SK-N-SH (cell line): ENCODE measurements at regions of chr2 and their contacts with region 1.

Region 1: DNA sequence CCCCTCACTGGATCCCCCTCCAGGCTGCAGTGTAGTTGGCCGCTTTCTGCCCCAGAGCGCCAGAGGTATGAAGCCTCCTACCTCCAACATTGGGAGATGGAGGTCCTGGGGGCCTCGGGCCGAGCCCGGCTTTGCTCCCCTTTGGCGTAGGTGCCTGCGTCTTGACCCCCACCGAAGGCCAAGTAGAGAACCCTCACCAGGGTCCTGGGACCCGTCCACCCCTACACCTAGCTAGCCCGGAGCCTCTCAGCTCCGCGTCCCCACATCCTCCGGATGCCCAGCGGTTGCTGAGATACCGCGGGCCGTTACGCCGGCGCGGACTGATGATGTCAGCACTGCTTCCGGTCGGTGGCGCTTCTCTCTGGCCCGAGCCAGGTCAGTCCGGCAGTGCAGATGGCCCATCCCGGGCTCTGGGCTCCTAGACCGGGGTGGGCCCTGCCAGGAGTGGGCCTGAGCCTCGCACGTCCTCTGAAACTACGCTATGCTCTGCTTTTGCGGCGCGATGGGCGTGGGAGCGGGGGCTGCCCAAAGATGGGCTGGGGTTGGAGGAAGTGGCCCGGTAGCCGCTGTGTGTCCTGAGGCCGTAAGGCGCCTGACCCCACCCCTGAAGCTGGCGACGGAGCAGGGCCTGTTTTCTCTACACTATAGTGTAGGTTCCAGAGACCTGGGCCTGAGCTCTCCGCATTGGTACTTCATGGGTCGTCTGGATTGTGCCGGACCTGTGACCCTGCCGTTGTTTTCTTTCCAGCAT is at the starts of genes GLB1L and STK16:
- DNase-seq: peak; percentile 98
- H3K4me3 ChIP-seq: peak within 1 kb of the TSS; percentile 84 to 97
- H3K27ac ChIP-seq: peak within 1 kb of the TSS; percentile 78 to 92
- H3K4me1 ChIP-seq: peaks cover 15 to 26% of the 10 kb centered on the region in 2 experiments
- H3K27me3 ChIP-seq: no peaks in the 10 kb centered on the region
- CTCF ChIP-seq: no peak
- EP300 ChIP-seq: no peak
- RAD21 ChIP-seq: peak; percentile 3; the same call in 1 of the 2 replicates
- polyA plus RNA-seq, gene GLB1L: 11.7 and 14.1 TPM in 2 replicates
- polyA plus RNA-seq, gene STK16: 57.6 and 78.6 TPM in 2 replicates

Region 2: GRCh38 chr2:219229305-219230058 is 15.8 kb before region 1 on chr2 and contains the starts of genes ANKZF1 and ATG9A:
- CTCF ChIA-PET with region 1: interaction called, 5 read pairs
- POLR2A ChIA-PET with region 1: interaction called, 23 read pairs
- DNase-seq: peak; percentile 98
- H3K4me3 ChIP-seq: peak within 1 kb of the TSS; percentile 82 to 87
- H3K27ac ChIP-seq: peak within 1 kb of the TSS; percentile 74 to 77
- H3K4me1 ChIP-seq: peaks cover 3 to 16% of the 10 kb centered on the region in 2 experiments; a peak in 1 of 4 replicates
- H3K27me3 ChIP-seq: no peaks in the 10 kb centered on the region
- CTCF ChIP-seq: no peak
- EP300 ChIP-seq: no peak
- RAD21 ChIP-seq: no peak
- polyA plus RNA-seq, gene ANKZF1: 22.3 and 30.8 TPM in 2 replicates
- polyA plus RNA-seq, gene ATG9A: 29.6 and 33.2 TPM in 2 replicates

Region 3: DNA sequence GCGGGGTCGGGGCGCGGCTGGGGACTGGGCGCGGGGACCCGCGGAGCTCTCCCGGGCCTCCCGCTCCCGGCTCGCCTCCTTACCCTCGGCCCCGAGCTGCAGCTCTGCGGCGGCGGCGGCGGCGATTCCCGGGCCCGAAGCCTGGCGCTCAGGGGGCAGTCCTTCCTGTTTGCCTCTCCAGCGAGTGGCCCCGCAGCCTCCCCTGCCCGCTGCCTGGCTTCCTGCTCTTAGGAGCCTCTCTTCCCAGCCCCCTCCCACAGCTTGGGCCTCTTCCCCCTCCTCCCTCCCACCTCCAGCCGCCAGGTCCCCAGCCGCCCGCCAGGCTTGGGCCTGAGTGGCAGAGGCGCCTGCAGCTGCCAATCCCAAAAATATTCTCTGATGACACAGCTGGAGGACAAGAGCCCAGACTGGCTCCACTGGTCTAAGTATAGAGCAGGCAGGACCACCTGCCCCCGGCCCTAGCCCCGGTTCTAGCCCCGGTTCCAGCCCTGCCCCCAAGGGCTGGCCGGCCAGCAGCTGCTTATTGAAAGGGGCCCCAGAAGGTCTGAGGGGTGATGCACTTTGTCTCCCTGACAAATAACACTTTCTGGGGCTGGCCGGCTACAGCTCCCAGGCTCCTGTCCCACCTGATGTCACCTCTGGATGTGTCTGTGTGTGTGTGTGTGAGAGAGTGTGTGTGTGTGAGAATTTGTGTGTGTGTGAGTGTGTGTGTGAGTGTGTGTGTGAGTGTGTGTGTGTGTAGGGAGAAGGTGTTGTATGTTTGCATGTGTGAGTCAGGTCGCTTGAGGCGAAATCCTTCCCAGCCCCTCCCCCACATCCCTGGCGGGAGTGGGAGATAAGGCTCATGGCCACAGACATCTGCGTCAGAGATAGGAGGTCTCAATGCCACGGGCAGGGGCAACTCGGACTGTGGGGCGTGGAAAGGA is 326.3 kb after region 1 on chr2 and contains the start of gene OBSL1:
- CTCF ChIA-PET with region 1: no interaction called
- POLR2A ChIA-PET with region 1: no interaction called
- DNase-seq: peak; percentile 97
- H3K4me3 ChIP-seq: peak within 1 kb of the TSS; percentile 65 to 82
- H3K27ac ChIP-seq: peak within 1 kb of the TSS; percentile 36 to 76
- H3K4me1 ChIP-seq: peaks cover 3 to 21% of the 10 kb centered on the region in 2 experiments; a peak in 1 of 4 replicates
- H3K27me3 ChIP-seq: no peaks in the 10 kb centered on the region
- CTCF ChIP-seq: no peak
- EP300 ChIP-seq: peak in 1 of 2 experiments; percentile 55; a peak in 1 of 4 replicates
- RAD21 ChIP-seq: no peak; the same call in 1 of the 2 replicates
- polyA plus RNA-seq, gene OBSL1: 70.9 and 93.0 TPM in 2 replicates